ENCODE measurements at regions of chr19 and their contacts with region 1.

Region 1: GRCh38 chr19:45798995-45799517 is 6.4 kb upstream of the DMWD start:
- DNase-seq: peak; percentile 65
- H3K4me3 Mint-ChIP-seq: no peak overlapping the region
- H3K27ac Mint-ChIP-seq: no peak overlapping the region
- H3K4me1 Mint-ChIP-seq: peaks cover 8% of the 10 kb centered on the region
- H3K27me3 Mint-ChIP-seq: peaks cover 47% of the 10 kb centered on the region

Region 2: DNA sequence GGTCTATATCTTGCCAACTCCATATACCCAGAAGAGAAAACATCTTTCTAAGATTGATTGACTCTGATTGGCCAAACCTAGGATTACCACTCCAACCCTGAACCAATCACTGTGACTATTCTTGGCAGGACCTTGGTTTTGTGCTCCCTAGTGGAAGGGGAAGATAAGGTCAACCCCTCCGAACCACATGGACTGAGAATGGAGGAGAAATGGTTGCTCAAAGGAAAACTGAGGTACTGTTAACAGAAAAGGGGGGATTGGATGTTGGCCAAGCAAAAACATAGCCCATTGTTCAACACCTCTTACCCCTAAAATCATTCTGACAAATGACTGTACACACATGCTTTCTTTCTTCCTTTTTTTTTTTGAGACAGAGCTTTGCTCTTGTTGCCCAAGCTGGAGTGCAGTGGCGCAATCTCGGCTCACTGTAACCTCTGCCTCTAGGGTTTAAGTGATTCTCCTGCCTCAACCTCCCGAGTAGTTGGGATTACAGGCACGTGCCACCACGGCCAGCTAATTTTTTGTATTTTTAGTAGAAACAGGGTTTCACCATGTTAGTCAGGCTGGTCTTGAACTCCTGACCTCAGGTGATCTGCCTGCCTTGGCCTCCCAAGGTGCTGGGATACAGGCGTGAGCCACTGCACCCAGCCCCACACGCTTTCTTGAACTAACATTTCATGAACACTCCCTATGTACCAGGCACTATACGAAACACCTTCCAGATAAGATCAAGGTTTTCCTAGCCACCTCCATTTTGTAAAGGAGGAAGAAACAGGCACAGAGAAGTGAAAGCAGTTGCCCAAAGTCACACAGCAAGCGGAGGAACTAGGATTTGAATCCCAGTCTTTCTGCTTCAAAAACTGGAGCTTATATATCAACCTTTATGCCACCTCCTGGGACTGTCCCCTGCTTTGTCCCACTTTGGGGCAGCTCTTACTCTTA is 59.3 kb before region 1 on chr19:
- CTCF ChIA-PET with region 1: no interaction called
- POLR2A ChIA-PET with region 1: no interaction called
- DNase-seq: no peak
- H3K4me3 Mint-ChIP-seq: no peak overlapping the region
- H3K27ac Mint-ChIP-seq: no peak overlapping the region
- H3K4me1 Mint-ChIP-seq: no peaks in the 10 kb centered on the region
- H3K27me3 Mint-ChIP-seq: peaks cover 10% of the 10 kb centered on the region

Region 3: GRCh38 chr19:45754323-45754722 is 44.7 kb before region 1 on chr19:
- CTCF ChIA-PET with region 1: no interaction called
- POLR2A ChIA-PET with region 1: no interaction called
- DNase-seq: no peak
- H3K4me3 Mint-ChIP-seq: no peak overlapping the region
- H3K27ac Mint-ChIP-seq: no peak overlapping the region
- H3K4me1 Mint-ChIP-seq: no peaks in the 10 kb centered on the region
- H3K27me3 Mint-ChIP-seq: peaks cover under 1% of the 10 kb centered on the region

Region 4: DNA sequence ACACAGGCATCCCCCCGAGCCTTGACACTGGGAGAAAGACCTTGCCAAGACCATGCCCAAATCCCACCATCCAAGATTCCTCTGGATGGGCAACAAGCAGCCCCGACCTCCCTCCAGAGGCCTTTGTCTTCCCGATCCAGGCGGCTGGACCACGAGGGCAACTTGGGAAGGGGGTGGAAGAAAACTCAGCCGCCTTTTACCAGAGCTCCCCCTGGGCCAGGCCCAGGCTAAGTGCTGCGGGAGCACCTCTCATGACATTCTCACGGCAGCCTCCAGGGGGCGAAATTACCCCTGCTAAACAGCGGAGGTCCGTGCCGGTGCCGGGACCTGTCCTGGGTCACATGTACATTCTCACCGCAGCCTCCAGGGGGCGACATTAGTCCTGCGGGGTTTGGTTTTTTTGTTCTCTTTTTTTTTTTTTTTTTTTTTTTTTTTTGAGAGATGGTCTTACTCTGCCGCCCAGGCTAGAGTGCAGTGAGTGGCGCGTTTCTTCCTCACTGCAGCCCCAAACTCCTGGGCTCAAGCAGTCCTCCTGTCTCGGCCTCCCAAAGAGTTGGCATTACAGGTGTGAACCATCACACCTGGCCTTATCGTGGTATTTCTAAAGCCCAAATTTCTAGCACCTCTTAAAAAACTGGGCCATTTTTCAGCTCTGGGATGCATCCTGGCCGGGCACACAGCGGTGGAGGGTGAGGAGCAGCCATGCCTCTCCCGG is 18.1 kb after region 1 on chr19:
- CTCF ChIA-PET with region 1: interaction called, 22 read pairs
- POLR2A ChIA-PET with region 1: interaction called, 3 read pairs
- DNase-seq: peak; percentile 96
- H3K4me3 Mint-ChIP-seq: no peak overlapping the region
- H3K27ac Mint-ChIP-seq: no peak overlapping the region
- H3K4me1 Mint-ChIP-seq: peaks cover 3% of the 10 kb centered on the region
- H3K27me3 Mint-ChIP-seq: no peaks in the 10 kb centered on the region

Region 5: GRCh38 chr19:45842198-45842597 is 43.1 kb after region 1 on chr19:
- CTCF ChIA-PET with region 1: no interaction called
- POLR2A ChIA-PET with region 1: no interaction called
- DNase-seq: no peak
- H3K4me3 Mint-ChIP-seq: no peak overlapping the region
- H3K27ac Mint-ChIP-seq: no peak overlapping the region
- H3K4me1 Mint-ChIP-seq: no peaks in the 10 kb centered on the region
- H3K27me3 Mint-ChIP-seq: no peaks in the 10 kb centered on the region

Region 6: GRCh38 chr19:45862564-45863334 is 63.7 kb after region 1 on chr19 and contains the start of gene SYMPK:
- CTCF ChIA-PET with region 1: no interaction called
- POLR2A ChIA-PET with region 1: no interaction called
- DNase-seq: peak; percentile 99
- H3K4me3 Mint-ChIP-seq: peak within 1 kb of the TSS; percentile 92
- H3K27ac Mint-ChIP-seq: peak within 1 kb of the TSS; percentile 96
- H3K4me1 Mint-ChIP-seq: peaks cover 36% of the 10 kb centered on the region
- H3K27me3 Mint-ChIP-seq: peaks cover 29% of the 10 kb centered on the region
- total RNA-seq, gene SYMPK: 88.3 to 89.2 TPM

Measured in activated CD4-positive, alpha-beta memory T cell treated with anti-CD3 and anti-CD28 coated beads, Interleukin-2, amount 10 ng/mL, durations not matched to agents 7 days and 5 days (primary cell).